Psoas muscle (tissue), 8 donors: ENCODE measurements at regions of chr19 and their contacts with region 1.

Region 1: GRCh38 chr19:37906869-37907734 is at the start of gene SIPA1L3:
- DNase-seq: peak; percentile 95 to 96
- ATAC-seq: peak; percentile 93 to 99 (median 98)
- H3K4me3 ChIP-seq: peak within 1 kb of the TSS; percentile 79
- H3K27ac ChIP-seq: peak within 1 kb of the TSS; percentile 76
- H3K4me1 ChIP-seq: peaks cover 18% of the 10 kb centered on the region
- H3K27me3 ChIP-seq: no peaks in the 10 kb centered on the region
- CTCF ChIP-seq: peak; percentile 6
- total RNA-seq, gene SIPA1L3: 6.1 to 28.2 (median 10.3) TPM

Region 2: GRCh38 chr19:38033658-38034498 is 126.8 kb after region 1 on chr19:
- intact Hi-C with region 1: loop called in 1 of 2 experiments (anchors 10 kb)
- DNase-seq: no peak
- ATAC-seq: no peak
- H3K4me3 ChIP-seq: no peak overlapping the region
- H3K27ac ChIP-seq: no peak overlapping the region
- H3K4me1 ChIP-seq: peaks cover 26% of the 10 kb centered on the region
- H3K27me3 ChIP-seq: no peaks in the 10 kb centered on the region
- CTCF ChIP-seq: no peak

Region 3: GRCh38 chr19:38142176-38143035 is 235.3 kb after region 1 on chr19:
- intact Hi-C with region 1: loop called in 1 of 2 experiments (anchors 5 kb)
- DNase-seq: peak; percentile 67 to 84
- ATAC-seq: peak; percentile 85 to 88 (median 85)
- H3K4me3 ChIP-seq: no peak overlapping the region
- H3K27ac ChIP-seq: no peak overlapping the region
- H3K4me1 ChIP-seq: no peaks in the 10 kb centered on the region
- H3K27me3 ChIP-seq: no peaks in the 10 kb centered on the region
- CTCF ChIP-seq: peak; percentile 69

Region 4: DNA sequence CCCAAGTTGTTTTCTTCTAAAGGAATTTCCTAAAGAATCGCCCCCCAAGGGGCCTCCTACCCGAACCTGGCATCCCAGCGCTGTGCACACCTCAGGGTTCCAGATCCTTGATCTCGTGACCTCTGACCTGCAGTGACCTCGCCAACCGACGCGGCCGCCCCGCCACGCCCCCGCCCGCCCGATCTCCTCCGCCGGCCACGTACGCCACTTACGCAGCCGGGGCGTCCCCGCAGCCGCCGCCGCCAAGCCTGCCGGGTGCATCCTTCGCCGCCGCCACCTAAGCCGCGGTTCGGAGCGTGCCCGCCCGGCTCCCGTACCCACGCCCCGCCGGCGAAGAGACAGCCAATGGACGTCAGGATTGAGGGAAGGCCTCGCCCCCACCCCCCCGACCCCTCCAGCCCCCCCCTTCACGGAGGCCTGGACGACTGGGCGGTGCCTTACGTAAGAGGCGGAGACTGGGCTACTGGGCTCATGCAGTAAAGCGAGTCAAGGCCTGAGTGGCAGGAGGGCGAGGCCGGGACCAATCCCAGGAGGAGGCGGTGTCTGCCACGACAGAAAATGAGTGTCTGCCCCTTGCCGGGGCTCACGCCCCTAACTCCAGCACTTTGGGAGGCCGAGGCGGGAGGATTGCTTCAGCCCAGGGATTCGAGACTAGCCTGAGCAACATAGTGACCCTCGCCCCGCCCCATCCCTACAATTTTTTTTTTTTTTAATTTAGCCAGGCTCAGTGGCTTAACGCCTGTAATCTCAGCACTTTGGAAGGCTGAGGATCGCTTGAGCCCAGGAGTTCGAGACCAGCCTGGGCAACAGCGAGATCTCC is 408.8 kb after region 1 on chr19 and contains the start of gene YIF1B:
- intact Hi-C with region 1: loop called in 1 of 2 experiments (anchors 5 kb)
- DNase-seq: peak; percentile 97 to 98
- ATAC-seq: peak; percentile 96 to 98 (median 96)
- H3K4me3 ChIP-seq: peak within 1 kb of the TSS; percentile 81
- H3K27ac ChIP-seq: peak within 1 kb of the TSS; percentile 90
- H3K4me1 ChIP-seq: peaks cover 8% of the 10 kb centered on the region
- H3K27me3 ChIP-seq: peaks cover 0 to 8% (median 0%) of the 10 kb centered on the region in 3 donors
- CTCF ChIP-seq: no peak
- total RNA-seq, gene YIF1B: 20.1 to 27.2 (median 21.6) TPM